ENCODE measurements at regions of chr5 and their contacts with region 1.

Region 1: DNA sequence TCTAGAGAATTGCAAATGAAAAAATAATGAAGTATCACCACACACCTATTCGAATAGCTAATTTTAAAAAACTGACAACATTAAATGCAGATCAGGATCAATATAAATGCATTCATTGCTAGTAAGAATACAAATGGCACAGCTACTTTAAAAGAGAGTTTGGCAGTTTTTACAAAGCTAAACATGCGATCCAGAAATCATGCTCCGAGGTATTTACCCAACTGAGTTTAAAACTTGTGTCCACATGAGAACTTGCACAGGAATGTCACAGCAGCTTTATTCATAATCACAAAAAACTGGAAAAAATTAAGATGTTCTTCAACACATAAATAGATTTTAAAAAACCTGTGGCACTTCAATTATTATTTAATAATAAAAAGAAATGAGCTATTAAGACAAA is 345.5 kb upstream of the TRPC7 start:
- DNase-seq: no peak
- ATAC-seq: no peak
- H3K4me3 ChIP-seq: no peak overlapping the region
- H3K27ac ChIP-seq: no peak overlapping the region
- H3K4me1 ChIP-seq: no peaks in the 10 kb centered on the region
- H3K27me3 ChIP-seq: no peaks in the 10 kb centered on the region
- CTCF ChIP-seq: no peak

Region 2: DNA sequence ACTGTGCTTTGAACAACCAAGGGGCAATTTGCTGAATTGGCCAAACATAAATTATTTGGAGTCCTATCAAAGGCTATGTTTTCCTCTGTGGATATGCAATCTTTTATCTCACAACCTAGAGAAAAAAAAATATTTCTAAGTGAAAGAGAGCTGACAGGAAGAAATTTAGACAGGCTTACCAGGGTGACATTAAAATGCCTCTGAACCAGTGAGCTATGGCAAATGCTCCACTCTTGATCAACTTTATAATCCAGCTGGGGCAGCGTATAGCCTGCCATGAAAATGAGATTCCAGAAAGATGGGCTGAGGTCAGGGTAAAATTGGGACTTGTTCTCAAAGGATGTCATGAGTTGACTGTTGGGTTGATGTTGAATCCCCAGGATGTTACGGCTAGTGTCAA is 53.8 kb after region 1 on chr5:
- CTCF ChIA-PET with region 1: interaction called, 12 read pairs
- POLR2A ChIA-PET with region 1: no interaction called
- in situ Hi-C with region 1: no loop called
- intact Hi-C with region 1: no loop called
- DNase-seq: no peak
- ATAC-seq: no peak
- H3K4me3 ChIP-seq: no peak overlapping the region
- H3K27ac ChIP-seq: no peak overlapping the region
- H3K4me1 ChIP-seq: no peaks in the 10 kb centered on the region
- H3K27me3 ChIP-seq: no peaks in the 10 kb centered on the region
- CTCF ChIP-seq: no peak

Measured in Panc1 (cell line).